Ovary (tissue), 10 donors: ENCODE measurements at regions of chr16 and their contacts with region 1.

Region 1: DNA sequence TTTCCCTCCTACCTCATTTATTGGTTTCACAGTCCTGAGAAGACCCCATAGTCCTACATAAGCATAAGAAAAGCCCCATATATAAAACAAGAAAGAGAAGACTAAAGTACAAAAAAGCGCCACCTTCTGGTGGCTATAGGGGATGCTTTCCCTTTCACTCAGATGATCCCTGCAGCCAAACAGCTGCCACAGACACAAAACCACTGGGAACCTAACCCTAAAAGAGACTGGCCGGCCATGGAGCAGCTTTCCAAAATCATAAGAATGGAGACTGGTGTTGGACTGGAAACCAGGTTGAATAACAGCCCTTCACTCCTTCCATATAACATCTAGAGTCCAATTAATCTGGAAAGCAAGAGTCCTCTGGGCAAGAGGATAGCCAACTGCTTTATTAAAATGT is 11.4 kb downstream of the DYNC1LI2 start:
- DNase-seq: no peak
- H3K4me3 ChIP-seq: no peak overlapping the region
- H3K27ac ChIP-seq: no peak overlapping the region
- H3K4me1 ChIP-seq: peaks cover 2% of the 10 kb centered on the region
- H3K27me3 ChIP-seq: no peaks in the 10 kb centered on the region
- CTCF ChIP-seq: no peak
- EP300 ChIP-seq: no peak
- POLR2A ChIP-seq: no peak

Region 2: DNA sequence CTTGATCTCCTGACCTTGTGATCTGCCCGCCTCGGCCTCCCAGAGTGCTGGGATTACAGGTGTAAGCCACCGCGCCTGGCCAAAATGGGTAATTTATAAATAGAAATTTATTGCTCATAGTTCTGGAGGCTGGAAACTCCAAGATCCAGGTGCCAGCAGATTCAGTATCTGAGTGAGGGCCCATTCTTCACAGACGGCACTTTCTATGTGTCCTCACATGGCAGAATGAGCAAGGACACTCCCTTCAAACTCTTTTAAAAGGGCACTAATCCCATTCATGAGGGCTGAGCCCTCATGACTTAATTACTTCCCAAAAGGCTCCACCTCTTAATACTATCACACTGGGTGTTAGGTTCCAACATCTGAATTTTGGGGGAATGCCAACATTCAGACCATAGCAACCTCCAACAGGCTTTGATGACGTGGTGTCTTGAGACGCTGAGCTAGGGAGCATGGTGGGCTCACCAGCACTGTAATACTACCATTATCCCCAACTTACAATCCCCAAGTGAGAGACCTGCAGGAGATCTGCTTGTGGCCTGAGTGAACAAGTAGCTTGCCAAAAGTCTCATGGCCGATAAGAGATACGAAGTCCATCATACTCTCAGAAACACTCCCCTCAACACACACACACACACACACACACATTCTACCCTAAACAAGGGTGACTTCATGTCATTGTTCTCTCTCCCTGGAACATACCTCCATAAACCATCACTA is 51.9 kb before region 1 on chr16:
- intact Hi-C with region 1: loop called in 1 of 4 experiments (anchors 2 kb)
- DNase-seq: no peak
- H3K4me3 ChIP-seq: no peak overlapping the region
- H3K27ac ChIP-seq: no peak overlapping the region
- H3K4me1 ChIP-seq: peaks cover 2% of the 10 kb centered on the region
- H3K27me3 ChIP-seq: no peaks in the 10 kb centered on the region
- CTCF ChIP-seq: no peak
- EP300 ChIP-seq: no peak
- POLR2A ChIP-seq: no peak